HepG2 (cell line): ENCODE measurements at regions of chr1 and their contacts with region 1.

Region 1: GRCh38 chr1:161292631-161293030 is 17.1 kb downstream of the MPZ start:
- DNase-seq: no peak
- ATAC-seq: no peak
- H3K4me3 ChIP-seq: no peak overlapping the region
- H3K27ac ChIP-seq: no peak overlapping the region
- H3K4me1 ChIP-seq: peaks cover 33% of the 10 kb centered on the region
- H3K27me3 ChIP-seq: no peaks in the 10 kb centered on the region; a peak in 1 of 5 replicates
- CTCF ChIP-seq: no peak
- EP300 ChIP-seq: no peak
- POLR2A ChIP-seq: no peak
- RAD21 ChIP-seq: no peak

Region 2: DNA sequence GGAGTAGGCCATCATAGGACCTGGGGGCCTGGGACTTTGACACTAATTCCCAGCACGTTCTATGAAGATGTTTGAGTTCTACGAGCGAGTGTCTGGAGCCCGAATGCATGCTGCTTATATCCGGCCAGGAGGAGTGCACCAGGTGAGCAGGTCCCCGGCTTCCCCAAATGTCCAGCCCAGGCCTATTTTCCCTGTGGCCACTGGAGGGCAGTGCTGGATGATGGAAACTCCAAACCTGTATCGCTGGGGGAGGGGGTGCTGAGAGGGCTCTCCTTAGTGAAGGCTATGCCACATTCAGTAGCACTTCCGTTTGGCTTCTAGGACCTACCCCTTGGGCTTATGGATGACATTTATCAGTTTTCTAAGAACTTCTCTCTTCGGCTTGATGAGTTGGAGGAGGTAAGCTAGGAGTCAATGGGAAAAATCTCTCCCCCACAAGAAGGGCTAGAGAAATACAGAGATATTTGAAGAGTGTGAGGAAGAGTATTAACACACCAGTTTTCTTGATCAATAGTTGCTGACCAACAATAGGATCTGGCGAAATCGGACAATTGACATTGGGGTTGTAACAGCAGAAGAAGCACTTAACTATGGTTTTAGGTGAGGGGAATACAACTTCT is 82.7 kb before region 1 on chr1:
- CTCF ChIA-PET with region 1: interaction called, 26 read pairs
- POLR2A ChIA-PET with region 1: interaction called, 3 read pairs
- in situ Hi-C with region 1: no loop called
- intact Hi-C with region 1: loop called (anchors 1 kb)
- DNase-seq: peak; percentile 79
- ATAC-seq: peak; percentile 96
- H3K4me3 ChIP-seq: no peak overlapping the region
- H3K27ac ChIP-seq: no peak overlapping the region
- H3K4me1 ChIP-seq: peaks cover 25% of the 10 kb centered on the region
- H3K27me3 ChIP-seq: no peaks in the 10 kb centered on the region
- CTCF ChIP-seq: peak; percentile 97
- EP300 ChIP-seq: no peak
- POLR2A ChIP-seq: no peak
- RAD21 ChIP-seq: peak; percentile 95

Region 3: GRCh38 chr1:161367684-161368400 is 75.2 kb after region 1 on chr1 and contains the start of gene CFAP126:
- CTCF ChIA-PET with region 1: no interaction called
- POLR2A ChIA-PET with region 1: no interaction called
- in situ Hi-C with region 1: no loop called
- intact Hi-C with region 1: no loop called
- DNase-seq: peak; percentile 90
- ATAC-seq: peak; percentile 99
- H3K4me3 ChIP-seq: no peak within 1 kb of the TSS
- H3K27ac ChIP-seq: peak within 1 kb of the TSS; percentile 73
- H3K4me1 ChIP-seq: peaks cover 23% of the 10 kb centered on the region
- H3K27me3 ChIP-seq: no peaks in the 10 kb centered on the region
- CTCF ChIP-seq: peak; percentile 67
- EP300 ChIP-seq: no peak
- POLR2A ChIP-seq: peak in 1 of 2 experiments; percentile 11; a peak in 1 of 4 replicates
- RAD21 ChIP-seq: peak; percentile 27; the same call in 1 of the 2 replicates
- total RNA-seq, gene CFAP126: not detected in 2 replicates